ENCODE measurements at regions of chr3 and their contacts with region 1.

Region 1: GRCh38 chr3:134699721-134700120 is 48.9 kb upstream of the KY start:
- DNase-seq: no peak
- H3K4me3 ChIP-seq: no peak overlapping the region
- H3K27ac ChIP-seq: peak overlapping the region; percentile 23 to 66
- H3K4me1 ChIP-seq: no peaks in the 10 kb centered on the region
- H3K27me3 ChIP-seq: no peaks in the 10 kb centered on the region
- CTCF ChIP-seq: no peak
- POLR2A ChIP-seq: no peak

Region 2: DNA sequence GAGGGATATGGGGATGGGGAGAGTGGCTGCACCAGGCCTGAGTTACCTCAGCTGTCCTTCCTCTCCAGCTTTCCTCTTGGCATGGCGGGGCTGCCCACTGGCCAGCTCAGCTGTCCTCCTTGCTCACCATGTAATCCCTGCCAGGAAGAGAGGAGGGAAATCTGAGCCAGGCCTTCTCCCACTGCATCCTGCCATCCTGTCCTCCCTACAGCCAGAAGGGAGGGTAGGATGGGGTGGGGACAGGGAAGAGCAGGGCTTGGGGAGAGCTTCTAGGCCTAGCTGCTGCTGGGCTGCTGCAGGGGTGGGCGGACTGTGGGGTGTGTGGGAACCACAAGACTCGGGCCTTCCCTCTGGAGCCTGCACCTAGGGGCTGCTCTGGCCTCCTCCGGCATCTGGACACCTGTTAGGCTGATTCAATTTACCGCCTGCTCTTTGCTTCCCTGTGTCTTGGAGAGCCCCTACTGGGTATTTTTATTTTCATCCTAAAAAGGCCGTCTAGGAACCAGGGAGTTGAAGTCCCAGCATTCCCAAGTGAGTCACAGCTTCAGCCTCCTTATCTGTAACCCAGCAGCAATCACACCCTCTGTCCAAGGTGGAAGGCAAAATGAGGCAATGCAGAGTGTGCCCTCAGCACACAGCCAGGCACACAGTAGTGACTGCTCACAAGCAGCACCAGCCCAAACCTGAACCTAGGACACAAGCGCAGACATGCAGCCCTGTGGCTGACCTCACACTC is 35.8 kb before region 1 on chr3:
- intact Hi-C with region 1: loop called (anchors 1 kb)
- DNase-seq: no peak
- H3K4me3 ChIP-seq: no peak overlapping the region
- H3K27ac ChIP-seq: peak overlapping the region in 1 of 2 donors; percentile 19
- H3K4me1 ChIP-seq: no peaks in the 10 kb centered on the region
- H3K27me3 ChIP-seq: no peaks in the 10 kb centered on the region
- CTCF ChIP-seq: no peak
- POLR2A ChIP-seq: no peak